ENCODE measurements at regions of chr15 and their contacts with region 1.

Region 1: GRCh38 chr15:56821721-56822425 is 88.6 kb upstream of the ZNF280D start:
- DNase-seq: peak; percentile 38 to 70 (median 50)
- ATAC-seq: peak; percentile 88 to 98 (median 95)
- H3K4me3 ChIP-seq: no peak overlapping the region
- H3K27ac ChIP-seq: no peak overlapping the region
- H3K4me1 ChIP-seq: no peaks in the 10 kb centered on the region
- H3K27me3 ChIP-seq: no peaks in the 10 kb centered on the region
- CTCF ChIP-seq: peak; percentile 36 to 64 (median 50)

Region 2: GRCh38 chr15:56929399-56929798 is 107.5 kb after region 1 on chr15:
- intact Hi-C with region 1: no loop called
- DNase-seq: no peak
- ATAC-seq: no peak
- H3K4me3 ChIP-seq: no peak overlapping the region
- H3K27ac ChIP-seq: no peak overlapping the region
- H3K4me1 ChIP-seq: peaks cover 12 to 25% (median 13%) of the 10 kb centered on the region in 3 donors
- H3K27me3 ChIP-seq: no peaks in the 10 kb centered on the region
- CTCF ChIP-seq: no peak

Region 3: GRCh38 chr15:57312318-57313133 is 490.7 kb after region 1 on chr15:
- intact Hi-C with region 1: loop called in 1 of 3 experiments (anchors 5 kb)
- DNase-seq: no peak
- ATAC-seq: peak in 3 of 4 donors; percentile 25 to 70 (median 65)
- H3K4me3 ChIP-seq: no peak overlapping the region
- H3K27ac ChIP-seq: no peak overlapping the region
- H3K4me1 ChIP-seq: no peaks in the 10 kb centered on the region
- H3K27me3 ChIP-seq: no peaks in the 10 kb centered on the region
- CTCF ChIP-seq: no peak

Measured in pancreas (tissue), 10 donors.